Activated CD8-positive, alpha-beta T cell treated with anti-CD3 and anti-CD28 coated beads, Interleukin-2, amount 10 ng/mL, durations not matched to agents 7 days and 5 days (primary cell): ENCODE measurements at regions of chr1 and their contacts with region 1.

Region 1: GRCh38 chr1:111214074-111214801 is 13.3 kb upstream of the CHI3L2 start:
- DNase-seq: no peak
- ATAC-seq: no peak
- H3K4me3 Mint-ChIP-seq: peak overlapping the region; percentile 76
- H3K27ac Mint-ChIP-seq: peak overlapping the region; percentile 91
- H3K4me1 Mint-ChIP-seq: peaks cover 83% of the 10 kb centered on the region
- H3K27me3 Mint-ChIP-seq: no peaks in the 10 kb centered on the region

Region 2: GRCh38 chr1:111139956-111140679 is 74.1 kb before region 1 on chr1 and contains the starts of genes CEPT1 and DRAM2:
- CTCF ChIA-PET with region 1: interaction called, 5 read pairs
- POLR2A ChIA-PET with region 1: interaction called, 18 read pairs
- DNase-seq: peak; percentile 97
- ATAC-seq: peak; percentile 82
- H3K4me3 Mint-ChIP-seq: peak within 1 kb of the TSS; percentile 97
- H3K27ac Mint-ChIP-seq: peak within 1 kb of the TSS; percentile 95
- H3K4me1 Mint-ChIP-seq: peaks cover 45% of the 10 kb centered on the region
- H3K27me3 Mint-ChIP-seq: no peaks in the 10 kb centered on the region
- total RNA-seq, gene CEPT1: 36.6 to 37.5 TPM
- total RNA-seq, gene DRAM2: 27.5 to 29.3 TPM

Region 3: DNA sequence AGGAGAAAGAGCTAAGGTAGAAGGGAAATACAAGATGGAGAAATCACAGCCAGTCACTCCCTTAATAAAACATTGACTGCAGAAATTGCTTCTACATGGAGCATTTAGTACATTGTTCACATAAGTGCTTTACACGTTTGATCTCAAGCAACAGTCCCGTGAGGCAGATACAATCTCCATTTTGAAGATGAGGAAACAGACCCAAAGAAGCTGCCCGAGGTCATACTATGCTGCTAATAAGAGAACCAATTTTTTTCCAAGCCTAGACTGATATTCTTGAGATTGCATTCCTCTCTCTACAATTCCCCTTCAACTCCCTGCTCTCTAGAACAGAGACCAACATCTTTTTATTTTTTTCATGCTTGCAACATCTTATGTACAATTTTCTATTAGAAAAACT is 24.8 kb before region 1 on chr1:
- CTCF ChIA-PET with region 1: interaction called, 528 read pairs
- POLR2A ChIA-PET with region 1: interaction called, 40 read pairs
- DNase-seq: no peak
- ATAC-seq: no peak
- H3K4me3 Mint-ChIP-seq: no peak overlapping the region
- H3K27ac Mint-ChIP-seq: peak overlapping the region; percentile 68
- H3K4me1 Mint-ChIP-seq: peaks cover 93% of the 10 kb centered on the region
- H3K27me3 Mint-ChIP-seq: no peaks in the 10 kb centered on the region

Region 4: DNA sequence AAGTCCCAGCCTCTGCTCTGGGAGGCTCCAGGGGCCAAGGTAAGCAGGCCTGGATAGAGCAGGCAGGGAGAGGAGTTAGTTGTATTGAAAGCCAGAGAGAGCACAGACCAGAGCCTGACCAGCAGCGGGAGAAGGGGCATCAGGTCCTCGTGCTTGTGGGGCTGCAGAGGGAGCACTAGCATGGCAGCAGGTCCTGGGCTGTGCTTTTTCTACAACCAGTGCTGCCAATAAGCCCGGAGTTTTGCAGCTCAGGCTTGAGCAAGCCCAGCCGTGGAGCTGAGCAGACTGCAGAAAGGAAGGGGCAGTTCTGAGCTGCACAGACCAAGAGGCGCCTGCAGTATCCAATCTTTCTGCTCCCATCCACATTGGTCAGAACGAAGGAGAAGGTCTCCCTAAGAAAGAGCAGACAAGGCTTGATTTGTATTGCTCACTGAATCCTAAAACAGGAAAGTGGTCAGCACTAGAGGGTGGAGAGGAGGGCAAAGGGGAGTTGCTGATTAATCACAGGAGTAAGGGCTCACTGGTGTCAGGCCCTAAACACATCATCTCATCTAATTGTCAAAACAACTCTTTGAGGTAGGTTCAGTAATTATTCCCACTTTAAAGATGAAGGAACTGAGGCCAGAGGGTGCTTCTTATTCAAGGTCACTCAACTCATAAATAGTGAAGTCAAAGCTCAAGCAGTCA is 16.5 kb before region 1 on chr1:
- CTCF ChIA-PET with region 1: interaction called, 528 read pairs
- POLR2A ChIA-PET with region 1: interaction called, 570 read pairs
- DNase-seq: peak; percentile 76
- ATAC-seq: peak; percentile 46
- H3K4me3 Mint-ChIP-seq: peak overlapping the region; percentile 99
- H3K27ac Mint-ChIP-seq: peak overlapping the region; percentile 99
- H3K4me1 Mint-ChIP-seq: peaks cover 62% of the 10 kb centered on the region
- H3K27me3 Mint-ChIP-seq: no peaks in the 10 kb centered on the region

Region 5: DNA sequence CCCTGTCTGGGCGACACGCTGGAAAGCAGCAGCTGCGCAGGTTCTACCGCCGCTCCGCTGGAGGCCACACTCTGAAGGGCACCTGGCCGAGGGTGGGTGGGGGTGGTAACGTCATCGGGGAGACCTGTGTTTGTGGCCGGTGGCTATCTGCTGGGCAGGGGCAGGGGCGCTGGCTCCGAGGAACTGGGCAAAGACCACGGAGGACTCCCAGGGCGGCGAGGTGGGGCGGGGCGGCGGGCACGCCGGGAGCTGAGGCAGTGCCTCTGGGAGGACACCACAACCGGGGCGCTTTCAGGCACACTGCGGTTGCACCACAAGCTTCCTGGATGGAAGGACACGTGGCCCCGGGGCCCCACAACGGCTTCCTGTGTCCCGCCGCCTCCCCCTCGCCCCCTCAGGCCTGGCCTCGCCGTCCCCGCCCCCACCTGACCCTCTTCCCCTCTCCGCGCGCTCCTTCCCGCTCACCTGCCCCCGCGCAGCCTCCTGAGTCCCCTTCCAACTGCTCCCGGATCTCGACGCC is 10.5 kb before region 1 on chr1:
- CTCF ChIA-PET with region 1: interaction called, 528 read pairs
- POLR2A ChIA-PET with region 1: interaction called, 570 read pairs
- DNase-seq: peak; percentile 94
- ATAC-seq: peak; percentile 51
- H3K4me3 Mint-ChIP-seq: peak overlapping the region; percentile 99
- H3K27ac Mint-ChIP-seq: peak overlapping the region; percentile 99
- H3K4me1 Mint-ChIP-seq: peaks cover 69% of the 10 kb centered on the region
- H3K27me3 Mint-ChIP-seq: no peaks in the 10 kb centered on the region

Region 6: DNA sequence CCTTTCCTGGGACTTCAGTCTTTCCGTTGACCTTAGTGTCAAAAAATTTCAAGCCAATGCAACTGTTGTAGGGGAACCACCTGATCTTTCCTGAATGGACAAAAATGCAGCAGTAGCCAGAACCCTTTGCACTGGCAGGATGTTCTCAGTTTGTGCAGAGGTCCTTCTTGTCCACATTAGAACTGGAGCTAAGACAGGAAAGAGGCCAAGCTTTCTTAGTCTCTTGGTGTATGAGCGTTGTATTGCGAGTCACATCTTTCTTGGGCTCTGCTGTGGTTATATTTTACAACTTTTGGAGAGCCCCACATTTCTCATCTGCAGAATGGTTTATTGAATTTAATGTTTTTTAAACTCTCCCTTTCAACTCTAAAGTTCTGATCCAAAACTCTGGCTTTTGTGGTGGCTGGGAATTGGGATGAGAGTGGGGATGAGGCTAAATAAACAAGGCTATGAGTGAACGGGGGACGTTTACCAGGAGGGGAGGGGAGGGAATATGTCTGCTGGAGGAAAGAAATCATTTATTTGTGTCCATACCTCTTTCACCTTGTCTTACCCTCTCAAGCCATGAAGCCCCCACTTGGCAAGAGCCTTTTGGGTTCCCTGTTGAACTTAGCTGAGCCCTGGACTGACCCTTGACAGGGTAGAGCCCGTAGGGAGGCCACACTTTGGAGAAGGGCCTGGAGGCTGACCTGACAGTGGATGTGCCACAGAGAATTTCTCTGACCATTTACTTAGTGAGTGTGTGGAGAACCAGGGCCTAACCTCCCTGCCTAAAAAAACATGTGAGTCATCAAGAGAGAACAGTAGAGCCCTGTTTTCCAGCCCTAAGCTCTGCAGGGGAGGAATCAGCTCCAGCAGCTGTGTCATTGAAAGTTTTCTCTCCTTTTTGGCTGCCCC is 13.9 kb after region 1 on chr1:
- CTCF ChIA-PET with region 1: interaction called, 15 read pairs
- POLR2A ChIA-PET with region 1: interaction called, 20 read pairs
- DNase-seq: no peak
- ATAC-seq: no peak
- H3K4me3 Mint-ChIP-seq: peak overlapping the region; percentile 16
- H3K27ac Mint-ChIP-seq: peak overlapping the region; percentile 72
- H3K4me1 Mint-ChIP-seq: peaks cover 79% of the 10 kb centered on the region
- H3K27me3 Mint-ChIP-seq: no peaks in the 10 kb centered on the region